ENCODE measurements at regions of chr10 and their contacts with region 1.

Region 1: GRCh38 chr10:96513698-96514561 is at the start of gene TLL2:
- DNase-seq: peak; percentile 47 to 70 (median 61)
- H3K4me3 ChIP-seq: peak within 1 kb of the TSS; percentile 22 to 75 (median 36)
- H3K4me3 Mint-ChIP-seq: peak within 1 kb of the TSS; percentile 70 to 95
- H3K27ac ChIP-seq: no peak within 1 kb of the TSS
- H3K27ac Mint-ChIP-seq: no peak within 1 kb of the TSS
- H3K4me1 ChIP-seq: peaks cover 21 to 23% of the 10 kb centered on the region in 2 donors
- H3K4me1 Mint-ChIP-seq: peaks cover 28% of the 10 kb centered on the region
- H3K27me3 ChIP-seq: peaks cover 58 to 77% of the 10 kb centered on the region in 2 donors
- H3K27me3 Mint-ChIP-seq: peaks cover 62 to 78% (median 66%) of the 10 kb centered on the region in 3 donors
- CTCF ChIP-seq: peak; percentile 68
- polyA plus RNA-seq, gene TLL2: not detected

Region 2: GRCh38 chr10:96339957-96340904 is 173.7 kb before region 1 on chr10:
- intact Hi-C with region 1: no loop called
- DNase-seq: peak; percentile 15 to 42 (median 32)
- H3K4me3 ChIP-seq: no peak overlapping the region
- H3K4me3 Mint-ChIP-seq: no peak overlapping the region
- H3K27ac ChIP-seq: no peak overlapping the region
- H3K27ac Mint-ChIP-seq: no peak overlapping the region
- H3K4me1 ChIP-seq: no peaks in the 10 kb centered on the region
- H3K4me1 Mint-ChIP-seq: peaks cover 6% of the 10 kb centered on the region
- H3K27me3 ChIP-seq: no peaks in the 10 kb centered on the region
- H3K27me3 Mint-ChIP-seq: peaks cover 0 to 3% (median 0%) of the 10 kb centered on the region in 3 donors
- CTCF ChIP-seq: peak; percentile 77

Region 3: GRCh38 chr10:96374985-96375830 is 138.7 kb before region 1 on chr10:
- intact Hi-C with region 1: loop called (anchors 2 to 5 kb)
- DNase-seq: peak; percentile 74 to 86 (median 82)
- H3K4me3 ChIP-seq: peak overlapping the region; percentile 21 to 73 (median 23)
- H3K4me3 Mint-ChIP-seq: peak overlapping the region; percentile 62 to 89
- H3K27ac ChIP-seq: no peak overlapping the region
- H3K27ac Mint-ChIP-seq: peak overlapping the region in 1 of 7 donors; percentile 58
- H3K4me1 ChIP-seq: peaks cover 14 to 19% of the 10 kb centered on the region in 2 donors
- H3K4me1 Mint-ChIP-seq: peaks cover 25% of the 10 kb centered on the region
- H3K27me3 ChIP-seq: peaks cover 0 to 5% of the 10 kb centered on the region in 2 donors
- H3K27me3 Mint-ChIP-seq: peaks cover 16 to 22% (median 19%) of the 10 kb centered on the region in 3 donors
- CTCF ChIP-seq: peak; percentile 99

Region 4: DNA sequence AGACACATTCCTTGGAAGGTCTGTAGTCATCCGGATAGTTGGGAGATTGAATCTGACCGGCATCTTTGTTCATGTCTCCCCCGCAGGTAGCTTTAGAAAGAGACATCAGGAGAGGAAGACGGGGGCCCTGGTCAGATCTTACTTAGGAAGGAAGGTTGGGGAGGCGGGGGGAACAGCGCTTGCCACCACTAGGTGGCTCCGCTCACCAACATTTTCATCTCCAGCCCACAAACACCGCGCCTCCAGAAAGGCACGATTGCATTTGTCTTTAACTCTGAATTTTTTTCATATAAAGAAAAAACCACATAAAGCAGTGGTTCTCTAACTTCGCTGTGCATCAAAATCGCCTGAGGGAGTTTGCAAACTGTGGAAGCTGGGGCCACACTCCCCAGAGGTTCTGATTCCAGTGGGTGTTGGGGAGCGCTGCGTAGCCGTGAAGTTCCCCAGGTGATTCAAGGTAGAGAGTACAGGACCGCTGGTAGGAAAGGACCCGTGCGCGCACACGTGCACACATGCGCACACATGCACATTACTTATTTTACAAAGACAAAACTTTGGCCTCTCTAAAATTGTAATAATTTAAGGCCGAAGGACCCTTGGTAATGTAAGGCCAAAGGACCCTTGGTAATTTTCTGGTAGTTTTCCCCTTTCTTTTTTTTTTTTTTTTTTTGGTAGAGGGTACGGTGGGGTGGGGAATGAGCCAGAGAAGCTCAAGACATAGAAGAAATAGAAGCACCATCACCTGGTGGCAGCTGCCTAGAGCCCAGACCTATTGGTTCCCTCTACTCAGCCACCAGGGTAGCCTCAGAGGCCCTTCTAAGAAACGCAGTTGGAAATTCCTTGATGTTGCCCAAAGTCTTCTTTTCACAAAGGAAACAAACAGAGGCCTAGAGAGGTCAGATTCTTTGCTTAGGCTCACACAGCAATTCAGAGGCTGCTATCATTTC is 117.7 kb before region 1 on chr10:
- intact Hi-C with region 1: loop called in 1 of 2 experiments (anchors 5 kb)
- DNase-seq: peak; percentile 51 to 63 (median 63)
- H3K4me3 ChIP-seq: no peak overlapping the region
- H3K4me3 Mint-ChIP-seq: no peak overlapping the region
- H3K27ac ChIP-seq: no peak overlapping the region
- H3K27ac Mint-ChIP-seq: no peak overlapping the region
- H3K4me1 ChIP-seq: no peaks in the 10 kb centered on the region
- H3K4me1 Mint-ChIP-seq: peaks cover 3% of the 10 kb centered on the region
- H3K27me3 ChIP-seq: peaks cover 0 to 2% of the 10 kb centered on the region in 2 donors
- H3K27me3 Mint-ChIP-seq: peaks cover 4 to 29% (median 23%) of the 10 kb centered on the region in 3 donors
- CTCF ChIP-seq: peak; percentile 92

Region 5: GRCh38 chr10:96570983-96571964 is 57.3 kb after region 1 on chr10:
- intact Hi-C with region 1: no loop called
- DNase-seq: no peak
- H3K4me3 ChIP-seq: no peak overlapping the region
- H3K4me3 Mint-ChIP-seq: no peak overlapping the region
- H3K27ac ChIP-seq: no peak overlapping the region
- H3K27ac Mint-ChIP-seq: peak overlapping the region in 1 of 7 donors; percentile 16
- H3K4me1 ChIP-seq: peaks cover 0 to under 1% of the 10 kb centered on the region in 2 donors
- H3K4me1 Mint-ChIP-seq: peaks cover under 1% of the 10 kb centered on the region
- H3K27me3 ChIP-seq: no peaks in the 10 kb centered on the region
- H3K27me3 Mint-ChIP-seq: no peaks in the 10 kb centered on the region
- CTCF ChIP-seq: no peak